Heart right ventricle (tissue), 16 donors: ENCODE measurements at regions of chr11 and their contacts with region 1.

Region 1: GRCh38 chr11:58024601-58025091 is 965 bp downstream of the OR9Q1 start:
- DNase-seq: peak; percentile 85 to 89
- ATAC-seq: peak; percentile 92 to 98 (median 95)
- H3K4me3 ChIP-seq: no peak overlapping the region
- H3K27ac ChIP-seq: peak overlapping the region in 9 of 10 donors; percentile 21 to 93 (median 81)
- H3K4me1 ChIP-seq: peaks cover 0 to 64% (median 36%) of the 10 kb centered on the region in 9 donors
- H3K27me3 ChIP-seq: no peaks in the 10 kb centered on the region
- CTCF ChIP-seq: no peak

Region 2: DNA sequence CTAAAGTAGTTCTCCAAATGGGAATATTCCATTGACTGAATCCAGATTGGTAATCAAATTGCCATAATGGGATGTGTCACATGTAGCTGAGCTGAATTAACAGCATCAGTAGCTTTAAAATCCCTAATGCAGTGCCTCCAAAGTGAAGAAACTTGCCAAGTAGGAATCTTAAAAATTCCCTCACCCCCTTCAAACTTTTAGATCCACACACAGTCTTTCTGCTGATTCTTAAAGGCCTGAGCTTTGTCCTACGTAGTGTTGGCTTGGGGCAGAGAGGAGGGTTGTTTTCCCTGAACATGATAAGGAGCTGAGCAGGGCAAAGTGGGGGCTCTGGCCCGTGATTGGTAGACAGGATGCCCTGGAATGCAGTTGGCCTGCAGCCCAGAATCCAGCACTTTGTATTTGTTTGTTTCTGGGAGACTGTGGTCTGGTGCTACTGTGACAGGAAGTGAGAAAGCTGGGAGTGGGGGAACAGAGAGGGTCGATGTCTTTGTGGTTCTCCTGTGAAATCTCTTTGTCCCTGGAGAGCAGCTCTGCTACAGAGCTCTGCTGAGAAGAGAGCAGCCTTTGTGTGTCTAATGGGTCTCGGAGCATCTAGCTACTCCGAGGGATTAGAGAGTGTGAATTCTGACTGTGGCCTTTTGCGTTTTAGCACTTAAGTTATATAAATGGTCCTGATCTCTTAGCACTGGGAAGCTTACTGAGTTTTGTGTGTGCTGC is 246.2 kb before region 1 on chr11:
- intact Hi-C with region 1: loop called in 1 of 10 experiments (anchors 10 kb)
- DNase-seq: peak; percentile 88 to 96
- ATAC-seq: peak; percentile 88 to 94 (median 92)
- H3K4me3 ChIP-seq: peak overlapping the region in 8 of 10 donors; percentile 5 to 41 (median 34)
- H3K27ac ChIP-seq: peak overlapping the region; percentile 74 to 95 (median 90)
- H3K4me1 ChIP-seq: peaks cover 48 to 100% (median 98%) of the 10 kb centered on the region in 9 donors
- H3K27me3 ChIP-seq: no peaks in the 10 kb centered on the region
- CTCF ChIP-seq: no peak

Region 3: DNA sequence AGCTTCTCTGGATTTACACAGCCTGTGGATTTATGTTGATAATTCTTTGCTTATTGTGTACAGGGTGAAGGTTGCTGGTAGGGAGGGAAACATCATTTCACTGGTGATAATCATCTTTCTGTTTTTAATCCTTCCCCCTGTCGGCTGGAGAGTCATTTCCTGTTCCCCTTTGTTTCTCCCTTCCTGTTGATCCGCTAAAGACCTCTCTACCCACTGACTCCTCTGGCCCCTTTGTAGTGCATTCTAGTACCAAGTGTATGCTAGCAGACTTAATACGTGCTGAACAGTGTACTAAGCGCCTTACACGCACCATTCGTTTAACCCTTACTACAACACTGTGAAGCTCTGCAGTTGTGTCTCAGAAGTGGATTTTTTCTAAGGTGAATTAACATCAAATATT is 20.0 kb before region 1 on chr11:
- intact Hi-C with region 1: loop called in 1 of 10 experiments (anchors 1 kb)
- DNase-seq: peak in 1 of 2 donors; percentile 39
- ATAC-seq: peak; percentile 81 to 94 (median 90)
- H3K4me3 ChIP-seq: no peak overlapping the region
- H3K27ac ChIP-seq: peak overlapping the region in 9 of 10 donors; percentile 7 to 89 (median 69)
- H3K4me1 ChIP-seq: peaks cover 0 to 36% (median 0%) of the 10 kb centered on the region in 9 donors
- H3K27me3 ChIP-seq: no peaks in the 10 kb centered on the region
- CTCF ChIP-seq: no peak

Region 4: GRCh38 chr11:58254936-58255335 is 230.3 kb after region 1 on chr11:
- intact Hi-C with region 1: no loop called
- DNase-seq: no peak
- ATAC-seq: no peak
- H3K4me3 ChIP-seq: no peak overlapping the region
- H3K27ac ChIP-seq: no peak overlapping the region
- H3K4me1 ChIP-seq: no peaks in the 10 kb centered on the region
- H3K27me3 ChIP-seq: no peaks in the 10 kb centered on the region
- CTCF ChIP-seq: no peak

Region 5: GRCh38 chr11:59810189-59810910 is 1785.7 kb after region 1 on chr11 and contains the start of gene MRPL16:
- intact Hi-C with region 1: no loop called
- DNase-seq: peak; percentile 85 to 88
- ATAC-seq: peak; percentile 97 to 99 (median 98)
- H3K4me3 ChIP-seq: peak within 1 kb of the TSS; percentile 82 to 97 (median 92)
- H3K27ac ChIP-seq: peak within 1 kb of the TSS; percentile 62 to 91 (median 88)
- H3K4me1 ChIP-seq: peaks cover 0 to 20% (median 13%) of the 10 kb centered on the region in 9 donors
- H3K27me3 ChIP-seq: no peaks in the 10 kb centered on the region
- CTCF ChIP-seq: peak in 2 of 9 donors; percentile 17 to 23
- total RNA-seq, gene MRPL16: 69.9 to 108 (median 89.8) TPM